ENCODE measurements at regions of chr22 and their contacts with region 1.

Region 1: GRCh38 chr22:39319270-39320022 is at the start of gene RPL3:
- DNase-seq: peak; percentile 98
- H3K4me3 ChIP-seq: peak within 1 kb of the TSS; percentile 61 to 83 (median 76)
- H3K27ac ChIP-seq: peak within 1 kb of the TSS; percentile 92 to 99 (median 96)
- H3K4me1 ChIP-seq: peaks cover 0 to 49% (median 43%) of the 10 kb centered on the region in 4 donors
- H3K27me3 ChIP-seq: no peaks in the 10 kb centered on the region
- CTCF ChIP-seq: peak in 1 of 4 experiments; percentile 13
- EP300 ChIP-seq: peak in 2 of 4 donors; percentile 62 to 93
- POLR2A ChIP-seq: peak; percentile 87 to 91
- total RNA-seq, gene RPL3: 1,532 to 2,212 (median 2,076) TPM

Region 2: GRCh38 chr22:38700789-38701628 is 618.4 kb before region 1 on chr22 and contains the start of gene JOSD1:
- intact Hi-C with region 1: loop called (anchors 5 kb)
- DNase-seq: peak; percentile 98
- H3K4me3 ChIP-seq: peak within 1 kb of the TSS; percentile 72 to 98 (median 88)
- H3K27ac ChIP-seq: peak within 1 kb of the TSS; percentile 91 to 100 (median 99)
- H3K4me1 ChIP-seq: peaks cover 0 to 56% (median 53%) of the 10 kb centered on the region in 4 donors
- H3K27me3 ChIP-seq: no peaks in the 10 kb centered on the region
- CTCF ChIP-seq: peak in 1 of 4 experiments; percentile 21
- EP300 ChIP-seq: peak in 3 of 4 donors; percentile 56 to 95 (median 91)
- POLR2A ChIP-seq: peak; percentile 70 to 82
- total RNA-seq, gene JOSD1: 34.9 to 46.0 (median 36.8) TPM

Region 3: GRCh38 chr22:39013942-39014722 is 305.3 kb before region 1 on chr22 and contains the start of gene APOBEC3C:
- intact Hi-C with region 1: loop called (anchors 5 kb)
- DNase-seq: peak; percentile 94
- H3K4me3 ChIP-seq: peak within 1 kb of the TSS; percentile 37 to 64 (median 58)
- H3K27ac ChIP-seq: peak within 1 kb of the TSS; percentile 80 to 91 (median 88)
- H3K4me1 ChIP-seq: peaks cover 0 to 26% (median 19%) of the 10 kb centered on the region in 4 donors
- H3K27me3 ChIP-seq: no peaks in the 10 kb centered on the region
- CTCF ChIP-seq: no peak
- EP300 ChIP-seq: no peak
- POLR2A ChIP-seq: peak in 1 of 2 donors; percentile 32
- total RNA-seq, gene APOBEC3C: 11.0 to 20.5 (median 15.3) TPM

Region 4: GRCh38 chr22:39039306-39040126 is 279.9 kb before region 1 on chr22:
- intact Hi-C with region 1: no loop called
- DNase-seq: no peak
- H3K4me3 ChIP-seq: peak overlapping the region in 1 of 4 donors; percentile 73
- H3K27ac ChIP-seq: peak overlapping the region; percentile 83 to 91 (median 86)
- H3K4me1 ChIP-seq: peaks cover 0 to 18% (median 10%) of the 10 kb centered on the region in 4 donors
- H3K27me3 ChIP-seq: no peaks in the 10 kb centered on the region
- CTCF ChIP-seq: no peak
- EP300 ChIP-seq: no peak
- POLR2A ChIP-seq: no peak

Region 5: DNA sequence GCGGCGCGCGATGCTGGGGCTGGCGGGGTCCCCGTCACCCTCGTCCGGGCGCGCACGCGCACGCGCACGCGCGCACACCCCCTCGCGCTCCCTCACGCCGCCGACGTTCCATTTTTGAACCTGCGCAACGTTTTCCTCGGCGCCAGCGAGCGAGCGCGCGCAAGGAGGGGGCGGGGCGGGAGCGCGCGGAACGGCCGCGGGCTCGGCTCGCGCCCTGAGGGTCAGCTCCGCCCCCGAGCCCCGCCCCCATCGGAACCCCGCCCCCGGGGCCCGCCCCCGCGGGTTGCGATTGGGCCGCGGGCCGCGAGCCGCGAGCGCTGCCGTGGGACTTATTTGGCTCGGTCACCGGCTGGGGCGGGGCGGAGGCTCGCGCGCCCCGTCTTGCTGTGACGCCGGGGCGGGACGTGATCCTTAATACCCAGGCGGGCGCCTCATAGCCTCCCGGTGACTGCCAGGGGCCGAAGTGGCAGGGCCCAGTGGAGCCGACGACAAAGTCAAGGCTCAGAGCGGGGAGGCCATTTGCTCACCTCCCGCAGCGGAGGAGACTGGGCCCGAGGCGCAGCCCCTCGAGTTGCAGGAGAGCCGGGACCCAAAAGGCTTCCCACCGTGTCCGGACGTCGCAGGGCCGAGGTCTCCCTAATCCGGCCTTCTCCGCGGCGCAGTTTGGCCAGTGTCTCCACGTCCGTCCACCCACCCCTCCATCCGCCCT is 166.8 kb before region 1 on chr22 and contains the start of gene CBX7:
- intact Hi-C with region 1: loop called (anchors 2 kb)
- DNase-seq: peak; percentile 98
- H3K4me3 ChIP-seq: peak within 1 kb of the TSS; percentile 75 to 99 (median 98)
- H3K27ac ChIP-seq: peak within 1 kb of the TSS; percentile 95 to 99 (median 98)
- H3K4me1 ChIP-seq: peaks cover 0 to 54% (median 42%) of the 10 kb centered on the region in 4 donors
- H3K27me3 ChIP-seq: no peaks in the 10 kb centered on the region
- CTCF ChIP-seq: no peak
- EP300 ChIP-seq: no peak
- POLR2A ChIP-seq: peak; percentile 88 to 93
- total RNA-seq, gene CBX7: 108 to 166 (median 125) TPM

Region 6: GRCh38 chr22:39170825-39171622 is 148.4 kb before region 1 on chr22:
- intact Hi-C with region 1: loop called (anchors 1 kb)
- DNase-seq: peak; percentile 89
- H3K4me3 ChIP-seq: no peak overlapping the region
- H3K27ac ChIP-seq: peak overlapping the region; percentile 24 to 47 (median 28)
- H3K4me1 ChIP-seq: peaks cover 0 to 39% (median 36%) of the 10 kb centered on the region in 4 donors
- H3K27me3 ChIP-seq: no peaks in the 10 kb centered on the region
- CTCF ChIP-seq: peak; percentile 84 to 96 (median 94)
- EP300 ChIP-seq: no peak
- POLR2A ChIP-seq: no peak

Region 7: DNA sequence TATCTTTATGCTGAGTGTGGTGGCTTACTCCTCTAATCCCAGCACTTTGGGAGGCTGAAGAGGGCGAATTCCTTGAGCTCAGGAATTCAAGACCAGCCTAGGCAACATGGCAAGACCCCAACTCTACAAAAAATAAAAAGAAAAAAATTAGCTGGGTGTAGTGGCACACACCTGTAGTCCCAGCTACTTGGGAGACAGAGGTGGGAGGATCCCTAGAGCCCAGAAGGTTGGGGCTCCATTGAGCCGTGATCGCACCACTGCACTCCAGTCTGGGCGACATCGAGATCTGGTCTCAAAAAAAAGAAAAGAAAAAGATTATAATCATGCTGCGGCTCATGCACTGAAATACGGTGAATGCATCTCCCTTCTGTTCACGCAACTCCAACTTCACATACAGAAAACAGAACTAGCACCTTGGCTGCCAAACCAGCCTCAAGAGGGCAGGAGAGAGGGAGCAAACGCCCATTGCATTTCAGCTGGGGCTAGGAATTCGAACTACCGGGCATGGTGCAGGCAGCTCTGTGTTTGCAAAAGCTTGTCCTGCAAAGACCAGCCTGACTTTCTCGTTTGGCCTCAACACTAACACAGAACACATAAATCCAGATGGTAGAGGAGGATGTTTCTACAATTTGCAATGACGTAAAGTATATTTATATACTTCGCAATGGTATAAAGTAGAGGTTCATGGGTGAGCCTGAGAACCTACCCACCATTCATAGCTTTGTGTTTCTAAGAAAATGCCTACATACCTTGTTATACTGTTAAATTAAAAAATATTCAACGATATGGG is 24.0 kb after region 1 on chr22:
- intact Hi-C with region 1: no loop called
- DNase-seq: no peak
- H3K4me3 ChIP-seq: no peak overlapping the region
- H3K27ac ChIP-seq: no peak overlapping the region
- H3K4me1 ChIP-seq: no peaks in the 10 kb centered on the region
- H3K27me3 ChIP-seq: no peaks in the 10 kb centered on the region
- CTCF ChIP-seq: peak in 3 of 4 experiments; percentile 34 to 65 (median 47)
- EP300 ChIP-seq: no peak
- POLR2A ChIP-seq: no peak